Tibial artery (tissue), 4 donors: ENCODE measurements at regions of chr3 and their contacts with region 1.

Region 1: DNA sequence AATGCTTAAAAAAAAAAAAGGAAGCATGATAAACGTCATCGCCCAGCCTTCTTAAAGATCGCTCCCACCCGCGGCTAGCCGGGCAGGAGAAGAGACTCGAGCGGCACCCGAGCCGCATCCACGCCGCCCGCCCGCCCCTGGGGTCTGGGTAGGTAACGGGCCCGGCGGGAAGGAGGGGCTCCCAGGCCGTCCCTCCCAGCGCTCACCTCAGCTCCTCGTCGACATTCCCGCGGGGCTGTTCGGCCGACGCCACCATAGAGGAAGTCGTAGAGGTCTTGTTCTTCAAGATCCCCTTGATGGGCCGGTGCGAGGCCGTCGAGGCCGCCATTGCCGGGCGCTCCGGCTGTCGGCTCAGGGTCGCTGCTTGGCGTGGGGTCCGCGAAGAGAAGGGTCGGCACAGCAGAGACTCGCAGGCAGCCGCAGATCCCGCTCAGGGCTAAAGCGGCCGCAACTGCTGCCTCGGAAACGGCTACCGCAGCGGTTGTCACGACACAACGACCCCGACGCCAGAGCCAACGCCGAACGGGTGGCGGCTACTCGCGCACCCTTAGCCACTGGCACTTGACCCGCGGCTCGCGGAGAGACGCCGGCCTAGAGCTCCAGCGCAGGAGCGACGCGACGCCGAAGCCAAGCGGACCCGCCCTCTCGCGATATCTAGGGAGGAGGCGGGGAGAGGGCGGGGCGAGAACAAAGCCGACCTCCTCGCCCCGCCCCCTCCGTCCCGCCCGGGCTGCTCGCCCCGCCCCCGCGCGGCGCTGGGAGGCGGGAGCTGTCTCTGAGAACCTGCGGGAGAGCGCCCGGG is at the start of gene PPP1R2:
- DNase-seq: peak; percentile 88 to 95
- H3K4me3 ChIP-seq: peak within 1 kb of the TSS; percentile 87 to 95
- H3K27ac ChIP-seq: peak within 1 kb of the TSS; percentile 90 to 94
- H3K4me1 ChIP-seq: peaks cover 0 to 70% (median 48%) of the 10 kb centered on the region in 4 donors
- H3K27me3 ChIP-seq: no peaks in the 10 kb centered on the region
- CTCF ChIP-seq: no peak

Region 2: GRCh38 chr3:195442573-195443390 is 100.1 kb before region 1 on chr3 and contains the start of gene ACAP2:
- intact Hi-C with region 1: loop called (anchors 10 kb)
- DNase-seq: peak; percentile 99 to 100
- H3K4me3 ChIP-seq: peak within 1 kb of the TSS; percentile 91 to 94
- H3K27ac ChIP-seq: peak within 1 kb of the TSS; percentile 94 to 98
- H3K4me1 ChIP-seq: peaks cover 0 to 26% (median 7%) of the 10 kb centered on the region in 4 donors
- H3K27me3 ChIP-seq: no peaks in the 10 kb centered on the region
- CTCF ChIP-seq: peak in 1 of 2 experiments; percentile 19